ENCODE measurements at regions of chr5 and their contacts with region 1.

Region 1: DNA sequence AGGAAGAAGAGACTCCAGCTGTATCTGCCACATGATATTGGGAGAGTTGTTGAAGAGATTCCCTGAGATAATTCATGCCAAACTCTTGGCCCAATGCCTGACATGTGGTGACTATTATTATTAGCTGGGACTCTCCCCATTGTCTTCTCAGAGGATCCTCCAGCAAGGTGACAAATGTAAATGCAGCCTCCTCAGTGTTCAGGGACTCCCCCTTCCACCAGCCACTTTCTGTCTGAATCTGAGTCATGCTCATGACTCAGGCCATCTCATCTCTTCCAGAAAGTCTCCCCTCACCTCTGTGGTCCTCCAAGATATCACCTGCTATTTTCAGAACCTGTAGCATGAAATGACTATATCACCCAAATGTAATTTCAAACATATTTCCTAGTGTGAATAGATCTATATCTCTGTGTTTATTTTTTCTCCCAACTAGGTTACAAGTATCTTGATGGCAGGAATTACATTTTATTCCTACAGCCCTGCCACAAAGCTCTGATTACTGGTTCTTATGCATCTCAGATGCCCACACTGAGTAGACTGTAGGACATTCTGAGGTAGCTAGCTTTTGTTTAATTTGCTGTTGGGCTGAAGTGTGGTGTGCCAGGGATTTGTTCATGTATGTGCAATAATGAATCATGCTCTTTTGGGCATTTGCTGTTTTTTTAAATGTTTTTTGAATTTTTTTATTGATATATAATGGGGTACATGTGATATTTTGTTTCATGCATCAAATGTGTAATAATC is 126.6 kb upstream of the IL12B start:
- DNase-seq: no peak
- ATAC-seq: peak; percentile 66
- H3K4me3 Mint-ChIP-seq: peak overlapping the region; percentile 35
- H3K27ac Mint-ChIP-seq: peak overlapping the region; percentile 76
- H3K4me1 Mint-ChIP-seq: peaks cover 72% of the 10 kb centered on the region
- H3K27me3 Mint-ChIP-seq: no peaks in the 10 kb centered on the region
- CTCF ChIP-seq: no peak

Region 2: DNA sequence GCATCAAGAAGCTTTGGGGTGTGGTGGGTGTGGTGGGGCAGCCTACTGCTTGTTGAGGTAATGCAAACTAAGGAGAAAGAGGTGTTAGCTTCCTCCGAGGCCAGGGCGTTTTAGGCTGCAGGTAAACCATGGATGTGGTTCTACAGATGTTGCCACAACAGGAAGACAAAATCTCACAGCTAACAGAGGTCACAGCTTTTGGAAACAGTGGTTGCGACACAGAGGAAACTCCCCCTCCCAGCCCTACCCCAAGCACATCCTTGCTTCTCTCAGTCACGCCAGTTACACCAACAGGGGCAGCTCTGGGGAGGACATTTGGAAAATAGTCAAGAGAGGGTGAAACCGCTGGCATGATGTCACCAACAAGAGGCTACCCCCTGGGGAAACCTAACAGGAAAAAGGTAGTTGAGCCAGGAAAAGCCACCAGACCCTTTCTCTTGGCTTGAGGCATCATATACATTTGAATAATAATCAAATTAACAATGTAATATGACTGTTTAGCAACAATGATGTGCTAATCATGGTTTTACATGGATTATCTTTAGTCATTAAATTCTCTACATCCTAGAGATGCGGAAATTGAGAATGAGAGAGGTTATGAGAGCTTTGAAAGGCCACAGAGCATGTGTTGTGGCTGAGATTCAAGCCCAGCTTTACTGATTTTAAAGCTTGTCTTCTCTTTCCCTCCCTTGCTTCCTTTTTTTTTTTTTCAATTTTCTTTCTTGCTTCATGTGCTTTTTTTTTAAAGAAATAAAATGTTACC is 44.4 kb before region 1 on chr5:
- CTCF ChIA-PET with region 1: interaction called, 3 read pairs
- POLR2A ChIA-PET with region 1: interaction called, 7 read pairs
- intact Hi-C with region 1: loop called (anchors 2 kb)
- DNase-seq: no peak
- ATAC-seq: peak; percentile 72
- H3K4me3 Mint-ChIP-seq: no peak overlapping the region
- H3K27ac Mint-ChIP-seq: peak overlapping the region; percentile 84
- H3K4me1 Mint-ChIP-seq: peaks cover 50% of the 10 kb centered on the region
- H3K27me3 Mint-ChIP-seq: no peaks in the 10 kb centered on the region
- CTCF ChIP-seq: no peak

Region 3: DNA sequence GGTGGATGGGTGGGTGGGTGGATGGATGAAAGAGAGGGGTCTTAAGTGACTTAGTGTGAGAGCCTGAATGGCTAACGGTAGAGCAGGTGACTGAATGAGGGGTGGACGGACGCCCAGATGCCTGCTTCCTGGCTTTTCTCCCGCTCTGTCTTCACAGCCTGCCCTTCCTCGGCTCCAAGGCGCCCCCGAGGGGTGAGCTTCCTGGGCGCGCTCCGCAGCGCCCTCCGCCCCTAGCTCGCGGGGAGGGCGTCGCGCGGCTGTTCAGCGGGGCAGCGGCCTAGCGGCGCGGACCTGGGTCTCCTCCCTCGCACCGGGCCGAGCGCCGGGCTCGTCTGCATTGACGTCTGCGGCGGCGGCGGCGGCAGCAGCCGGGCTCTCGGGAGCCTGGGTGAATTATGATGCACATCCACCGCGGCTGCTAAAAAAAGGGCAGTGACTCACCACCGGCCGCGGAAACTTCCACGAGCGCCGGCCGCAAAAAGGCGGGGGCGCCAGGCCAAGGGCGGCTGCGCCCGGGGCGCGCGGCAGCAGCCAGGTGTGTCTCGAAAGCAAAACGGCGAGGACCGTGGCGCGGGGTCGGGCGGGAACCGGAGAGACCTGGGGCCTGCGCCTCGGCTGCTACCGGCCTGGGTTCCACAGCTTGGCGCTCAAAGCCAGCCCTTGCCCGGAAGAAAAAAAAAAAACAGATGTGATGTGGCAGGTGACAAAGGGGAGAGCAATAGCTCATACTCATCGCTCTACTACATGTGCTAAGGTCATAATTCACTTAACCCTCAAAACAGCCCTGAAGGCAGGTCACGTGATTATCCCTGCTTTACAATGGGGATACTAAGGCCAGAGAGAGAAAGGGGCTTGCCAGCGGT is 316.4 kb after region 1 on chr5:
- CTCF ChIA-PET with region 1: no interaction called
- POLR2A ChIA-PET with region 1: interaction called, 3 read pairs
- intact Hi-C with region 1: loop called (anchors 2 kb)
- DNase-seq: peak; percentile 78
- ATAC-seq: peak; percentile 95
- H3K4me3 Mint-ChIP-seq: peak overlapping the region; percentile 74
- H3K27ac Mint-ChIP-seq: peak overlapping the region; percentile 56
- H3K4me1 Mint-ChIP-seq: peaks cover 12% of the 10 kb centered on the region
- H3K27me3 Mint-ChIP-seq: peaks cover 14% of the 10 kb centered on the region
- CTCF ChIP-seq: no peak

Region 4: DNA sequence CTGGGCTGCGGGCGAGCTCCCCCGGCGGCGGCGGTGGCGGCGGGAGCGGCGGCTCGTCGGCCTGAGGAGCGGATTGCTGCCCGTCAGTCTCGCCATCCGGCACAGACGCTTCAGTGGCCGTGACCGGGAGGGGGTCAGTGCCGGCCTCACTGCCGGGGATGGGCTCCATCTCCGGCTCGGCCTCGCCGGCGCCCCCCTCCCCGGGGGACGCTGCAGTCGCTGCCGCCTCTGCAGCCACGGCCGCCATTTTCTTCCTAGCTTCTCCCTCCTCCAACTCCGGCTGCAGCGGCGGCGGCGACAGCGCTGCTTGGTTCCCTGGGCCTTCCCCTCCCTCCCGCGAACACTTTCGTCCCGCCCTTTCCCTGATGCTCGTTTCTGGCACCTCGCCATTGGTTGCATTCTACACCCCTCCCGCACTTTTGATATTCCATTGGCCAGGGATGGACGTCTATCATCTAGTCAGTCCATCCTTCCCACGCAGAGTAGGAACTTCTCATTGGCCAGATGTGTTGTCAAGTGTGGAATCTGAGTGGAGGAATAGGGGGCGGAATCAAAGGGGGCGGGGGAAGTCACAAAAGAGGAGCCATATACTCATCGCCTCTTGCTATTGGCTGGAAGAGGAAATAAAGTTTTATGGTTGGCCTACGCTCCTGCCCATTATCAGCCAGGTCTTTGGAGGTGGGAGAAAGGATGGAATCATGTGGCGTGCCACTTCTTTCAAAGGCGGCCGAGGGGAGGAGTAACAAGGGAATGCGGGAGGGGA is 662.4 kb after region 1 on chr5 and contains the start of gene PWWP2A:
- CTCF ChIA-PET with region 1: no interaction called
- POLR2A ChIA-PET with region 1: no interaction called
- intact Hi-C with region 1: loop called (anchors 2 kb)
- DNase-seq: peak; percentile 81
- ATAC-seq: peak; percentile 92
- H3K4me3 Mint-ChIP-seq: peak within 1 kb of the TSS; percentile 95
- H3K27ac Mint-ChIP-seq: peak within 1 kb of the TSS; percentile 92
- H3K4me1 Mint-ChIP-seq: peaks cover 17% of the 10 kb centered on the region
- H3K27me3 Mint-ChIP-seq: peaks cover 6% of the 10 kb centered on the region
- CTCF ChIP-seq: no peak
- total RNA-seq, gene PWWP2A: 25.8 and 33.0 TPM in 2 replicates

Measured in activated B cell treated with CpG ODN at 0.5 μM for 24 hours (primary cell).